WTC11 (cell line): ENCODE measurements at regions of chr1 and their contacts with region 1.

Region 1: GRCh38 chr1:109984456-109985275 is at the start of gene AHCYL1:
- DNase-seq: peak; percentile 99
- ATAC-seq: peak; percentile 93
- H3K4me3 Mint-ChIP-seq: peak within 1 kb of the TSS; percentile 96
- H3K27ac Mint-ChIP-seq: peak within 1 kb of the TSS; percentile 93
- H3K4me1 Mint-ChIP-seq: peaks cover 42% of the 10 kb centered on the region
- H3K27me3 Mint-ChIP-seq: no peaks in the 10 kb centered on the region; the same call in 1 of the 2 replicates
- CTCF ChIP-seq: peak; percentile 92
- total RNA-seq, gene AHCYL1: 92.1 to 99.4 TPM (median 98.6 TPM) in 3 replicates

Region 2: GRCh38 chr1:109667452-109668122 is 317.1 kb before region 1 on chr1 and contains the start of gene GSTM2:
- CTCF ChIA-PET with region 1: interaction called, 10 read pairs
- POLR2A ChIA-PET with region 1: no interaction called
- DNase-seq: peak; percentile 95
- ATAC-seq: peak; percentile 100
- H3K4me3 Mint-ChIP-seq: peak within 1 kb of the TSS; percentile 68
- H3K27ac Mint-ChIP-seq: peak within 1 kb of the TSS; percentile 50
- H3K4me1 Mint-ChIP-seq: peaks cover 6% of the 10 kb centered on the region
- H3K27me3 Mint-ChIP-seq: peaks cover 3% of the 10 kb centered on the region; the same call in 1 of the 2 replicates
- CTCF ChIP-seq: no peak
- total RNA-seq, gene GSTM2: 12.9 to 15.4 TPM (median 15.3 TPM) in 3 replicates

Region 3: DNA sequence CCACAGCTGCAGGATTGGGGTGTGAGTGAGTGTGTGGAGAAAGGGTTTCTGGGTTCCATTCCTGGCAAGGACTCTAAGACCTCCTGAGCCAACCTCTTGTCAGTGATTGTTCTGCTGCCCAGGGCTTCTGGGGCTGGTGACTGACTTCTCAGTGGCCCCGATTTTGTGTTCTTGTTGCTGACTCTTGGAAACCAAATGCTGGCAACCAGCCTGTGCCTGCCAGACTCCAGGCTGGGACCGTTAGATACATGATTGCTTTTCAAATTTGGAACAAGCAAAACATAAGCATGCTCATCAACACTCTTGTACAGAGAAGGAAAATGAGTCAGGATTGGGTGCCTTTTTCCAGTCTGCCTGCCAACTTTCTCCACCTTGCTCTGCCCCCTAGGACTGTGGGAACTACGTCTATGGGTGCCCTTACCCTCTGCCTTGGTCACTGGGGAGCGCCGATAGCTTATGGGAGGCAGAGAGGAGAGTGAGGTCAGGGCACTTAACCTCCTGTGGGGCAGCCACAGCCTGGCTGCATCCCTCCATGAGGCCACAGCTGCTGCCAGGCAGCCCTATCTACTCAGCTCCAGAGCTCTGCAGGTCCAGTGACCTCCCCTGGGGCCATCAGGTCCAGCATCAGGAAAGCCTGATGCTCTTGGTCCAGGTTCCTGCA is 181.6 kb before region 1 on chr1:
- CTCF ChIA-PET with region 1: interaction called, 13 read pairs
- POLR2A ChIA-PET with region 1: interaction called, 3 read pairs
- DNase-seq: no peak
- ATAC-seq: no peak
- H3K4me3 Mint-ChIP-seq: no peak overlapping the region
- H3K27ac Mint-ChIP-seq: no peak overlapping the region
- H3K4me1 Mint-ChIP-seq: no peaks in the 10 kb centered on the region
- H3K27me3 Mint-ChIP-seq: no peaks in the 10 kb centered on the region
- CTCF ChIP-seq: no peak

Region 4: GRCh38 chr1:109895720-109896504 is 88.8 kb before region 1 on chr1:
- CTCF ChIA-PET with region 1: interaction called, 13 read pairs
- POLR2A ChIA-PET with region 1: interaction called, 4 read pairs
- DNase-seq: no peak
- ATAC-seq: no peak
- H3K4me3 Mint-ChIP-seq: no peak overlapping the region
- H3K27ac Mint-ChIP-seq: no peak overlapping the region
- H3K4me1 Mint-ChIP-seq: no peaks in the 10 kb centered on the region
- H3K27me3 Mint-ChIP-seq: peaks cover 5% of the 10 kb centered on the region; the same call in 1 of the 2 replicates
- CTCF ChIP-seq: no peak

Region 5: GRCh38 chr1:109931189-109931731 is 53.4 kb before region 1 on chr1:
- CTCF ChIA-PET with region 1: interaction called, 21 read pairs
- POLR2A ChIA-PET with region 1: interaction called, 4 read pairs
- DNase-seq: peak; percentile 95
- ATAC-seq: peak; percentile 99
- H3K4me3 Mint-ChIP-seq: no peak overlapping the region
- H3K27ac Mint-ChIP-seq: peak overlapping the region; percentile 98
- H3K4me1 Mint-ChIP-seq: peaks cover 23% of the 10 kb centered on the region
- H3K27me3 Mint-ChIP-seq: no peaks in the 10 kb centered on the region
- CTCF ChIP-seq: no peak

Region 6: GRCh38 chr1:110011527-110012041 is 26.9 kb after region 1 on chr1:
- CTCF ChIA-PET with region 1: interaction called, 78 read pairs
- POLR2A ChIA-PET with region 1: interaction called, 8 read pairs
- DNase-seq: no peak
- ATAC-seq: peak; percentile 88
- H3K4me3 Mint-ChIP-seq: no peak overlapping the region
- H3K27ac Mint-ChIP-seq: 0 out of 2 replicates have a peak overlapping the region, but pooled peaks have one; percentile 50
- H3K4me1 Mint-ChIP-seq: peaks cover 11% of the 10 kb centered on the region
- H3K27me3 Mint-ChIP-seq: no peaks in the 10 kb centered on the region
- CTCF ChIP-seq: no peak